ENCODE measurements at regions of chr11 and their contacts with region 1.

Region 1: DNA sequence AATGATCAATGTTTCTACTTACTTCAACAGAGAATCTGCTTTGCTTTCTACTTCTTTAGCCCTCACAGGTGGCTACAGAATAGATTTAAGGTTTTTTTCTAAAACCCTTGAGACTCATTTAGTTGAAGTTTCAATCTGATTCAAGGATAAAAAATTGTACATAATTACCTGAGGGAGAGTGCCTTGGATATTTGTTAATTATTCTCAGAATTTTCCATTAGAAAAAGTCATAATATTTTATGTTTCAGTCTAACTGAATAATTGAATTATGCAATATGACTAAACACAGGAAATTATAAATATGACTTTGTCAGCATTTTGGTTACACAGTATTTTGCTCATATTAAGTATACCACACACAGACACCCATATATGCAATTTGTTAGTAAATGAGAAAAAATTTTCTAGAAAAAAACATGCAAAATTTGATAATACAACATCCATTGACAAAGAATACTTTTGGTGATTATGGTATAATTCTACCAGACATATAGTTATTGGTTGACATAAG is at the start of gene OR8J3:
- ATAC-seq: no peak
- H3K4me3 ChIP-seq: no peak within 1 kb of the TSS
- H3K27ac ChIP-seq: no peak within 1 kb of the TSS
- H3K4me1 ChIP-seq: no peaks in the 10 kb centered on the region
- total RNA-seq, gene OR8J3: 0.14 TPM in 1 of 8 experiments, not detected in the others

Region 2: DNA sequence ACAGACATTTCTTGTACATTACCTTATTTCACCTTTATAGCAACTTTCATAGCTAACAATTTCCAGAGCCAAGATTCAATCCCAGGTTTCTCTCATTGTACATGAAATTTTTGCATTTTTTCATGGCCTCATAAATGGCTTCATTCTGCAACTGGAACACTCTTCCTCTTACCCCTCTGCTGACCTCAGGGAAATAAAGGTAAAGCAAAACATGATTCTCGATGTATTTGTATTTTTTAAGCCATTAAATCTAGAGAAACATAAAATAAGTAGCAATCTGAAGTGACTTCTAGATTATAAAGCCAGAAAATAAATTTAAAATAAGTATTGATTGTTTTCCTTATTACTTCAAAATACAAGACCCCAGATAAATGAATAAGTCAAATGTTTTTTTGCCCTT is 93.9 kb after region 1 on chr11 and contains the start of gene OR5T2:
- in situ Hi-C with region 1: loop called in 1 of 9 experiments (anchors 25 kb)
- ATAC-seq: no peak
- H3K4me3 ChIP-seq: no peak within 1 kb of the TSS
- H3K27ac ChIP-seq: no peak within 1 kb of the TSS
- H3K4me1 ChIP-seq: no peaks in the 10 kb centered on the region
- total RNA-seq, gene OR5T2: 0.15 to 0.38 TPM in 2 of 8 experiments, not detected in the others